Heart right ventricle (tissue), 16 donors: ENCODE measurements at regions of chrX and their contacts with region 1.

Region 1: GRCh38 chrX:7637066-7637465 is 205.9 kb upstream of the VCX start:
- DNase-seq: no peak
- ATAC-seq: no peak
- H3K4me3 ChIP-seq: no peak overlapping the region
- H3K27ac ChIP-seq: no peak overlapping the region
- H3K4me1 ChIP-seq: no peaks in the 10 kb centered on the region
- H3K27me3 ChIP-seq: no peaks in the 10 kb centered on the region
- CTCF ChIP-seq: no peak

Region 2: GRCh38 chrX:6867354-6867753 is 769.7 kb before region 1 on chrX:
- intact Hi-C with region 1: loop called in 1 of 10 experiments (anchors 5 kb)
- DNase-seq: no peak
- ATAC-seq: no peak
- H3K4me3 ChIP-seq: no peak overlapping the region
- H3K27ac ChIP-seq: no peak overlapping the region
- H3K4me1 ChIP-seq: no peaks in the 10 kb centered on the region
- H3K27me3 ChIP-seq: no peaks in the 10 kb centered on the region
- CTCF ChIP-seq: no peak

Region 3: GRCh38 chrX:7372843-7373525 is 264.1 kb before region 1 on chrX:
- intact Hi-C with region 1: no loop called
- DNase-seq: no peak
- ATAC-seq: no peak
- H3K4me3 ChIP-seq: no peak overlapping the region
- H3K27ac ChIP-seq: no peak overlapping the region
- H3K4me1 ChIP-seq: no peaks in the 10 kb centered on the region
- H3K27me3 ChIP-seq: no peaks in the 10 kb centered on the region
- CTCF ChIP-seq: no peak

Region 4: GRCh38 chrX:7586126-7586525 is 50.9 kb before region 1 on chrX:
- intact Hi-C with region 1: no loop called
- DNase-seq: no peak
- ATAC-seq: no peak
- H3K4me3 ChIP-seq: no peak overlapping the region
- H3K27ac ChIP-seq: no peak overlapping the region
- H3K4me1 ChIP-seq: no peaks in the 10 kb centered on the region
- H3K27me3 ChIP-seq: no peaks in the 10 kb centered on the region
- CTCF ChIP-seq: peak in 6 of 9 donors; percentile 32 to 48 (median 39)

Region 5: DNA sequence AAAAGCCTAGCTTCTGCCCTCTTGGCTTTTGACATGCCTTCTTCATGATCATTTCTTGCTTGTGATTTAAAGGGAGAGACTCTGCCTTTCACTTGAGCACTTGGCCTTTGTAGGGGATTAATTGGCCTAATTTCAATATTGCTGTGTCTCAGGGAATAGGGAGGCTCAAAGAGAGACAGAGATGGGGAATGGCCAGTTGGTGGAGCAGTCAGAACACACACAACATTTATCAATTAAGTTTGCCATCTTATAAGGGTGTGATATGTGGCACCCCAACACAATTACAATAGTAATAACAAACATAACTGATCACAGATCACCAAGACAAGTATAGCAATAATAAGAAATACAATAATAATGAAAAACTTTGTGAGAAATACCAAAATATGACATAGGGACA is 83.5 kb after region 1 on chrX:
- intact Hi-C with region 1: no loop called
- DNase-seq: no peak
- ATAC-seq: no peak
- H3K4me3 ChIP-seq: no peak overlapping the region
- H3K27ac ChIP-seq: no peak overlapping the region
- H3K4me1 ChIP-seq: no peaks in the 10 kb centered on the region
- H3K27me3 ChIP-seq: no peaks in the 10 kb centered on the region
- CTCF ChIP-seq: no peak

Region 6: GRCh38 chrX:8484360-8484949 is 847.4 kb after region 1 on chrX:
- intact Hi-C with region 1: loop called in 1 of 10 experiments (anchors 5 kb)
- DNase-seq: no peak
- ATAC-seq: no peak
- H3K4me3 ChIP-seq: no peak overlapping the region
- H3K27ac ChIP-seq: no peak overlapping the region
- H3K4me1 ChIP-seq: no peaks in the 10 kb centered on the region
- H3K27me3 ChIP-seq: no peaks in the 10 kb centered on the region
- CTCF ChIP-seq: no peak